Tibial artery (tissue), 4 donors: ENCODE measurements at regions of chr15 and their contacts with region 1.

Region 1: GRCh38 chr15:73873889-73874511 is 636 bp downstream of the TBC1D21 start:
- DNase-seq: peak in 1 of 2 donors; percentile 52
- H3K4me3 ChIP-seq: no peak overlapping the region
- H3K27ac ChIP-seq: no peak overlapping the region
- H3K4me1 ChIP-seq: no peaks in the 10 kb centered on the region
- H3K27me3 ChIP-seq: peaks cover 0 to 31% of the 10 kb centered on the region in 2 donors
- CTCF ChIP-seq: peak; percentile 63 to 69

Region 2: GRCh38 chr15:73908030-73908821 is 34.2 kb after region 1 on chr15:
- intact Hi-C with region 1: loop called (anchors 5 kb)
- DNase-seq: peak; percentile 88
- H3K4me3 ChIP-seq: no peak overlapping the region
- H3K27ac ChIP-seq: no peak overlapping the region
- H3K4me1 ChIP-seq: peaks cover 0 to 2% (median 0%) of the 10 kb centered on the region in 4 donors
- H3K27me3 ChIP-seq: no peaks in the 10 kb centered on the region
- CTCF ChIP-seq: peak; percentile 89 to 95

Region 3: GRCh38 chr15:73964736-73965093 is 90.7 kb after region 1 on chr15:
- intact Hi-C with region 1: no loop called
- DNase-seq: peak; percentile 90 to 92
- H3K4me3 ChIP-seq: no peak overlapping the region
- H3K27ac ChIP-seq: no peak overlapping the region
- H3K4me1 ChIP-seq: peaks cover 0 to 11% (median 5%) of the 10 kb centered on the region in 4 donors
- H3K27me3 ChIP-seq: no peaks in the 10 kb centered on the region
- CTCF ChIP-seq: peak; percentile 95 to 96